ENCODE measurements at regions of chr16 and their contacts with region 1.

Region 1: DNA sequence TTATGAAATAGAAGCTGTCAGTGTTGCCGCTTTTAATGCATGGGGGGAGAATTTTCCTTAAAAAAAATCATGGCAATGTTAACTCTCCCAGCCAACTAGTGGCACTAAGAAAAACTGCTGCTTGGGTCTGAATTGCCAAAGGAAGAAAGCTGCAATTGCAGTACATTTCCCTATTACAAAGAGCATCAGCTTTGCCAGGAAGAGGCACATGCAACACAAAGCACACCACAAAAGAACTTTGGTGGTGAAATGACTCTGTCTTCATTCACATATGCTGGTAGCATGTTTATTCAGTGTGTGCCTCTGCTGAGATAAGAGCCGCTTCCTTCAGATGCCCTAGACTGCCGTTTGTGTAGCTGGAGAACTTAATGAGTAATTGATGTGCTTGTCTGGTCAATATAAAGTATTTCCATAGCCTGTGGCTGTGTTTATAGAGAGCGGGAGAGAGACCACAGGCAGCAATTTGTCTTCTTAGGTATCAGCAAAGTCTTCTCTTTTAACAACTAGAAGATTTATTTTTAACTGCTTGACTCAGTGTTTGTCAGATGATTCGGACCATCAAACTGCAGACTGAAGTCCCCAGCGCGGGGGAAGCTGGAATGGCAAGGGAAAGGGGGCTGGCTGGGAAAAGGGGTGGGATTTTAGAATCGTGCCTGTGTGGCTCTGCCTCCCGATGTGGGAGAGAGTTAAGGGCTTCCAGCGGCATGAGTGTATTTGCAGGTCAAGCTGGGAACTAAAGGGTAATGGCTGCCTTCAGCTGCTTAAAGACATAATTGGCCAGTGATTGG is 115.1 kb downstream of the MRTFB start:
- DNase-seq: peak; percentile 46
- ATAC-seq: peak; percentile 92
- H3K4me3 Mint-ChIP-seq: peak overlapping the region; percentile 40
- H3K27ac Mint-ChIP-seq: peak overlapping the region; percentile 57
- H3K4me1 Mint-ChIP-seq: peaks cover 33% of the 10 kb centered on the region
- H3K27me3 Mint-ChIP-seq: no peaks in the 10 kb centered on the region
- CTCF ChIP-seq: 0 out of 2 replicates have a peak, but pooled peaks have one; percentile 16

Region 2: GRCh38 chr16:14202697-14203096 is 16.5 kb after region 1 on chr16:
- CTCF ChIA-PET with region 1: interaction called, 12 read pairs
- POLR2A ChIA-PET with region 1: no interaction called
- DNase-seq: no peak
- ATAC-seq: no peak
- H3K4me3 Mint-ChIP-seq: no peak overlapping the region
- H3K27ac Mint-ChIP-seq: no peak overlapping the region
- H3K4me1 Mint-ChIP-seq: peaks cover 9% of the 10 kb centered on the region
- H3K27me3 Mint-ChIP-seq: no peaks in the 10 kb centered on the region
- CTCF ChIP-seq: no peak; the same call in 1 of the 2 replicates

Region 3: GRCh38 chr16:14405611-14406537 is 219.7 kb after region 1 on chr16:
- CTCF ChIA-PET with region 1: no interaction called
- POLR2A ChIA-PET with region 1: no interaction called
- DNase-seq: peak; percentile 96
- ATAC-seq: peak; percentile 97
- H3K4me3 Mint-ChIP-seq: no peak overlapping the region
- H3K27ac Mint-ChIP-seq: no peak overlapping the region
- H3K4me1 Mint-ChIP-seq: peaks cover 8% of the 10 kb centered on the region
- H3K27me3 Mint-ChIP-seq: no peaks in the 10 kb centered on the region
- CTCF ChIP-seq: no peak

Measured in WTC11 (cell line).